Activated CD4-positive, alpha-beta T cell treated with anti-CD3 and anti-CD28 coated beads for 36 hours (primary cell): ENCODE measurements at regions of chr11 and their contacts with region 1.

Region 1: GRCh38 chr11:123246749-123247495 is 51.9 kb upstream of the CLMP start:
- DNase-seq: peak; percentile 93
- ATAC-seq: peak; percentile 96
- H3K4me3 Mint-ChIP-seq: no peak overlapping the region
- H3K27ac Mint-ChIP-seq: no peak overlapping the region
- H3K4me1 Mint-ChIP-seq: peaks cover 4% of the 10 kb centered on the region
- H3K27me3 Mint-ChIP-seq: peaks cover 5% of the 10 kb centered on the region

Region 2: GRCh38 chr11:122863704-122864326 is 383.1 kb before region 1 on chr11:
- CTCF ChIA-PET with region 1: interaction called, 3 read pairs
- POLR2A ChIA-PET with region 1: no interaction called
- intact Hi-C with region 1: loop called in 1 of 2 experiments (anchors 5 kb)
- DNase-seq: peak; percentile 71
- ATAC-seq: no peak
- H3K4me3 Mint-ChIP-seq: no peak overlapping the region
- H3K27ac Mint-ChIP-seq: no peak overlapping the region
- H3K4me1 Mint-ChIP-seq: no peaks in the 10 kb centered on the region
- H3K27me3 Mint-ChIP-seq: peaks cover 5% of the 10 kb centered on the region

Region 3: DNA sequence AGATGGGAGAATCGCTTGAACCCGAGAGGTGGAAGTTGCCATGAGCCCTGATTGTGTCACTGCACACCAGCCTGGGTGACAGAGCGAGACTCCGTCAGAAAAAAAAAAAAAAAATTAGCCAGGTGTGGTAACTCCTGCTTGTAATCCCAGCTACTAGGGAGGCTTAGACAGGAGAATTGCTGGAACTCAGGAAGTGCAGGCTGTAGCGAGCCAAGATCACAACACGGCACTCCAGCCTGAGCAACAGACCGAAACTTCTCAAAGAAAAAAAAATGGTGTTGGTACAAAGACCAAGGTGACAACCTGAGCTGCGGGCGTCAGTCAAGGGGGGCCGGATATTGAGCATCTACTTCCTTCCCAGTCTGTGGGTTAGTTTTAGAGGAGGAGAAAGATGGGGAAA is 136.6 kb before region 1 on chr11:
- CTCF ChIA-PET with region 1: interaction called, 141 read pairs
- POLR2A ChIA-PET with region 1: interaction called, 4 read pairs
- intact Hi-C with region 1: loop called (anchors 1 kb)
- DNase-seq: no peak
- ATAC-seq: no peak
- H3K4me3 Mint-ChIP-seq: no peak overlapping the region
- H3K27ac Mint-ChIP-seq: peak overlapping the region; percentile 5
- H3K4me1 Mint-ChIP-seq: no peaks in the 10 kb centered on the region
- H3K27me3 Mint-ChIP-seq: no peaks in the 10 kb centered on the region

Region 4: GRCh38 chr11:123211149-123211852 is 35.6 kb before region 1 on chr11:
- CTCF ChIA-PET with region 1: interaction called, 11 read pairs
- POLR2A ChIA-PET with region 1: no interaction called
- intact Hi-C with region 1: no loop called
- DNase-seq: no peak
- ATAC-seq: no peak
- H3K4me3 Mint-ChIP-seq: no peak overlapping the region
- H3K27ac Mint-ChIP-seq: no peak overlapping the region
- H3K4me1 Mint-ChIP-seq: no peaks in the 10 kb centered on the region
- H3K27me3 Mint-ChIP-seq: peaks cover 15% of the 10 kb centered on the region

Region 5: GRCh38 chr11:123268118-123268517 is 21.2 kb after region 1 on chr11:
- CTCF ChIA-PET with region 1: interaction called, 15 read pairs
- POLR2A ChIA-PET with region 1: no interaction called
- intact Hi-C with region 1: no loop called
- DNase-seq: no peak
- ATAC-seq: no peak
- H3K4me3 Mint-ChIP-seq: no peak overlapping the region
- H3K27ac Mint-ChIP-seq: no peak overlapping the region
- H3K4me1 Mint-ChIP-seq: no peaks in the 10 kb centered on the region
- H3K27me3 Mint-ChIP-seq: peaks cover 8% of the 10 kb centered on the region